Cardiac septum (tissue), 1 donor: ENCODE measurements at regions of chr10 and their contacts with region 1.

Region 1: DNA sequence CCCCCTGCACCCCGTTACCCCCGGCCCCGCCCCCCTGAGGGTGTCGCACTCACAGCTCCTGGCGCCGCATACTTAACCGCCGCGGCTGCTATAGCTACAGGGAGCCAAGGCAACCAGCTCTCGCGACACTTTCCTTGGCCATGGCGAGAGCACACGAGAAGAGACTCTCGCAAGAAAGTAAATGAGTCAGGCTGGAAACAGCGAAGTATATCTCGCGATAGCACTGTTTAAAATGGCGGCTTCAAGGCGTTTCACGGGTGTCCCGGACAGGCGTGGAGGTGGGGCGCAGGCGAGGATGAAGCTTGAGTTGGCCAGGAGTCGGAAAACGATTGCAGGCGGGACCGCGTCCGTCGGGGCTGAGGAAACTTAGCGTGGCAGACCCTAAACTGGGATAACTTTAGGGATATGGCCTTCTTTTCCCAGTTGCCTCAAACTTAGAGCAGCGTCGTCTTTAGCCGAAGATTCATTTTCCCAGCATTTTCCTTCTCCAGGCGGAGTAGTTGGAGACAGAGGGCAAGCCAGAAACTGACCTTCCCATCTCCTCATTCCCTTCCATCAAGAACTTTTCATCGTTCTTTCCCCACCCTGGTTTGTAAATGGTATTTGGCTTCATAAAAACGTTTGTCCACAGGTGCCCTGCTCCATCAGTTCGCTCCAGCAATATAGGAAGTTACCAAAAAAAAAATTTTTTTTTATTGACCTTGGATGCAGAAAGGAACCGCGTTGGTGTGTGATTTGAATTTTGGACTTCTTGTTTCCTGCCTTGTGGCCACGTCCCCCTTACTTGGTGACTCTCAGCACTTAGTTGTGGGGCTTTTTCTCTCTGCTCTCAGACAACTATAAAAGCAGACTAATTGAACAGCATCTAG is 15.2 kb downstream of the MYOZ1 start:
- DNase-seq: peak; percentile 94

Region 2: DNA sequence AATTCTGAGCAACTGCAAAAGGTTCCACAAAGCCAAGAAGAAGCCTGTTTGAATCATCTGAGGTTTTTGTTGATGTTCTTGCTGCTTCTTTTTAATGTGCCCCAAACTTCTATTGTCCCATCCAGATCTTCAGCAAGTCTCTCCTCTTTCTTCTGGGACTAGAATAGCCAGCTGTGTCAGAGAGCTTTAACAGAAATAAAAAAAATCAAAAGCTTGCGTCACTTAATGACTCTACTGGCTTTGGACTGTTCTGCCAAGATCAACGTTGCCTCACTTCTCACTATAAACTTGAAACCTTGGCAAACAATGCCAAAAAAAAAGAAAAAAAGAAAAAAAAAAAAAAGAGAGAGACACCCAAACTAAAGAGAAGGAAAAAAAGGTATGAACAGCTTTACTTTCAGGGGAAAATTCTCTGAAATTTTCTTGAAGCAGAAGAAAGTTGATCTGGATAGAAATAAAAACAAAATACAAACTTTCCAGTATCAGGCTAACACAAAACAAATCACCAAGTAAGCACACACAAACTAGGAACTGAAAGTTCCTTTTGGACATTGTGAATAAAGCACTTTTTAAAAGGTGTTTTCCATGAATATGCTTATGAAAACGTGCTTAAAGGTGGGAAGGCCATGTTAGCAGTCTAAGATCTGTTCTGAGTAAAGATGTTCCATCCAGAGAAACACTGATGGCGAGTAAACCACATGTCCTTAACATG is 49.8 kb before region 1 on chr10:
- intact Hi-C with region 1: loop called (anchors 5 kb)
- DNase-seq: no peak

Region 3: DNA sequence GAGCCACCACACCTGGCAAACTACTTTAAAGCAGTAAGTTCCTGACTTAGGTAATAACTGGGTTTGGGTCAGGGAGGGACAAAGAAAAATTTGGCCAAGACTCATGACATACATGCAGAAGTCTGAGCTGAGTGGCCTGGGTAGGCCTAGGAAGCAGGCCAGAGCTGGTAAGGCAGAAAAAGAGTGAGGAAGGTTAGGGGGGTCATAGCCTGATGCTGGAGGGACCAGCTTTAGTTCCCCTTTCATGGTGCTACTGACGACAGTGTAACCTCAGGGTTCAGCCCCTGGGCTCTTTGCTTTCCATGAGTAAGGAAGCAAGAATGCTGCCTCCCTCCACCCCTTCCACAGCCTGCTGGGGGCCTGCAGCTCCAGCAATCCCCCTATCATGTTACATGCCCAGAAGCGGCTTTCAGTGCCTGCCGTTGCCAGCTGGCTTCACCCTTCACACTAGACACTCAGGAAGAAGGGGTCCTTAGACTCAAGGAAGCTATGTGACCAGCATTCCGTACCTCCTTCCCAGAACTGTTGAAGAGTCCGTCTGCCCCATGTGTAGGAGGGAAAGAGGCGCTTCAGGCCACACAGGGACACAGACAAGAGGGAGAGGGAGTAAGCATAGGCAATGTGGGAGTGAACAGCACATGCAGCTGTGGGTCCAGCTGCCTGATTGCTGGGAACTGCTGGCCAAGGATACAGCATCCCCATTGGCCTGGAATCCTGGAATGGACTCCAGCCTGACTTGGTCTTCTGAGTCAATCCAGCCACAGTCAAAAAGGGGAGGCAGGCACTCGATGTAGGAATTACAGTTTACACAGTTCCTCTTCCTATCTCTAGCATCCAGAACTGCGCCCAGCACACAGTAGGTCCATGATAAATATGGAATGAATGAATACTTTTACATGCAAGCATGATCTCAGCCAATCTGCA is 280.7 kb after region 1 on chr10:
- intact Hi-C with region 1: no loop called
- DNase-seq: no peak